Panc1 (cell line): ENCODE measurements at regions of chr5 and their contacts with region 1.

Region 1: DNA sequence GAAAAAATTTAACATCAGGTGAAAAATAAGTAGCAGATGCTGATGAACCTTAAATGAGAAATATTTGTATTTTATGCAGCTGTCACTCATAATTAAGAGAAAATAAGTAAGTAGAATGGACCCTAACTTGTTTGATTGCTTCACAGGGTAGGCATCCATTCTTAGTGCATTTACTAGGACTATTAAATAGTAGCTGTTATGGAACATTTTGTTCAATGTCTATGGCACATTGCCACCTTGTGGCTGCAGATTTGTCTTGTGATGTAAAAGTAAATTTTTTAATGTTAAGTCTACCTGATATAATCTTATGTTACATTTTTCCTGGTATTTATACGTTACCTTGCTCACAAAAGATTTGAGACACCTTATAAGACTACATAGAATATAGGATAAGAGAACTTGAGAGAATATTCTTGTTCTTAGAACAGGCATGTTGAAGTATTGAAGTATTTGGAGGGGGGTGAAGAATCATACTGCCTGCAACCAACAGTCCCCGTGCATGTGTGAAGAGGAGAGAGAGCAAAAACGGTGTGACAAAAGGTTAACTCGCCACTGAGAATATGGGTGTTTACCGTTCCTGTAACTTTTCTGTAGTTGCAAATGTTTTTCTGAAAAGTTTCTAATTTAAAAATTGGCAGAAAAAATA is 161.1 kb downstream of the MAST4 start:
- DNase-seq: peak; percentile 28
- ATAC-seq: 0 out of 2 replicates have a peak, but pooled peaks have one; percentile 71
- H3K4me3 ChIP-seq: no peak overlapping the region
- H3K27ac ChIP-seq: no peak overlapping the region
- H3K4me1 ChIP-seq: no peaks in the 10 kb centered on the region
- H3K27me3 ChIP-seq: peaks cover 2% of the 10 kb centered on the region; the same call in 1 of the 2 replicates
- CTCF ChIP-seq: peak; percentile 46; the same call in 1 of the 2 replicates

Region 2: DNA sequence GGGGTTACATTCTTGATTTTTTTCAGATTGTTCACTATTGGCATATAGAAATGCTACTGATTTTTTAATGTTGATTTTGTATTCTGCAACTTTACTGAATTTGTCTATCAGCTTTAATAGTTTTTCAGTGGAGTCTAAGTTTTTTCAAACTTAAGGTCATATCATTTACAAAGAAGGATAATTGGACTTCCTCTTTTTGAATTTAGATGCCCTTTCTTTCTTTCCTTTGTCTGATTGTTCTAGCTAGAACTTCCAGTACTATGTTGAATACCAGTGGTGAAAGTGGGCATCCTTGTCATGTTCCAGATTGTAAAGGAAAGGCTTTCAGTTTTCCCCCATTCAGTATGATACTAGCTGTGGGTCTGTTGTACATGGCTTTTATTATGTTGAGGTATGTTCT is 563.9 kb before region 1 on chr5:
- CTCF ChIA-PET with region 1: interaction called, 17 read pairs
- POLR2A ChIA-PET with region 1: no interaction called
- in situ Hi-C with region 1: no loop called
- intact Hi-C with region 1: no loop called
- DNase-seq: no peak
- ATAC-seq: no peak
- H3K4me3 ChIP-seq: no peak overlapping the region
- H3K27ac ChIP-seq: no peak overlapping the region
- H3K4me1 ChIP-seq: no peaks in the 10 kb centered on the region
- H3K27me3 ChIP-seq: no peaks in the 10 kb centered on the region
- CTCF ChIP-seq: no peak

Region 3: DNA sequence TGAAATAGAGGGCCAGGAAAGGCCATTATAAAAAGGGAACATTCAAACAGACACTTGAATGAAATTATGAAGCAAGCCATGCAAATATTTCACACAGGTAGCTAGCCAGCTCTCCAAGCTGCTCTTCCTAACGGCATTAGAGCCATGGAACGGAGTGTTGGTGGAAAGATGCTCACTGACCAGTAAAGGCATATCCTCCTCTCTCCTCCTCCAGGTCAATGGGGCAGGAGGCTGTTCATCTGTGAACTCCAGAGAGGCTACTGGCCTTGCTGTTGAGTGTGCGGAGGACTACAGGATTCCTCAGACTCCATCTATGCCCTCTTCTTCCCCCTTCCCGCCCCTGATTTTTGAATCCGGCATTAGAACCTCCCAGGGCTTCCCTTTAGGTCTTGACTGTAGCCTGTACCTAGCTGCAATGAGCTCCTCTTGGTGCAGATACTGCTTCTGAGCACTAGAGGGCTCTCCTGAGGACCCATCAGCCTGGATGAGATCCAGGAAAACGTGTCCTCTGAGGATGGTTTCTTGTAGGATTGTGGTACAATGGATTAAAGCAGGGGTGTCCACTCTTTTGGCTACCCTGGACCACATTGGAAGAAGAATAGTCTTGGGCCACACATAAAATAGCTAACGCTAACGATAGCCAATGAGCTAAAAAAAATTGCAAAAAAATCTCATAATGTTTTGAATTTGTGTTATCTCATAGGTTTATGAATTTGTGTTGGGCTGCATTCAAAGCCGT is 451.0 kb before region 1 on chr5:
- CTCF ChIA-PET with region 1: interaction called, 5 read pairs
- POLR2A ChIA-PET with region 1: no interaction called
- in situ Hi-C with region 1: no loop called
- intact Hi-C with region 1: loop called (anchors 1 kb)
- DNase-seq: peak; percentile 54
- ATAC-seq: peak; percentile 85
- H3K4me3 ChIP-seq: no peak overlapping the region
- H3K27ac ChIP-seq: no peak overlapping the region
- H3K4me1 ChIP-seq: no peaks in the 10 kb centered on the region
- H3K27me3 ChIP-seq: no peaks in the 10 kb centered on the region; the same call in none of the 2 replicates
- CTCF ChIP-seq: peak; percentile 91

Region 4: DNA sequence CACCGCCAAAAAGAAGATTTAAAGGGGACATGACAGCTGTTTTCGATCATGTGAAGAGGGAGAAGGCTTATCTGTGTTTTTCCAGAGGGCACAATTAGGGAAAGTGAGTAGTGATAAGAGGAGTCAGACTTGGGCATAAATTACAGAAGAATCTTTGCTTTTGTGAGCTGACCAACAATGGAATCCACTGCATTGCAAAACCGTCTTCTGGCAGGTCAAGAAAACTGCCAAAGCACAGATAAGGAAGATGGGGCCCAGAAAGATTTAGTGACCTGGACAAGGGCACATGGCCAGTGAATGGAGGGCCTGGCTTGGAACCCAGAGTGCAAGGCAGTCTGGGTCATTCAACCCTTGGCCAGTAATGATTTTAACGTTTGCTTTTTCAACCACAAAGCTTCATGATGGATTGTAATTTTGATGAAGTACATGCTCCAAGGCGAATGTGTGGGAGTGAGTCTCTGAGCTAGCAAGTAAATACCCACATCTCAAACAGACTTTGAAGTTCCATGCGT is 314.3 kb before region 1 on chr5:
- CTCF ChIA-PET with region 1: no interaction called
- POLR2A ChIA-PET with region 1: no interaction called
- in situ Hi-C with region 1: no loop called
- intact Hi-C with region 1: no loop called
- DNase-seq: no peak
- ATAC-seq: no peak
- H3K4me3 ChIP-seq: no peak overlapping the region
- H3K27ac ChIP-seq: no peak overlapping the region
- H3K4me1 ChIP-seq: no peaks in the 10 kb centered on the region
- H3K27me3 ChIP-seq: no peaks in the 10 kb centered on the region
- CTCF ChIP-seq: no peak

Region 5: GRCh38 chr5:66769839-66770617 is 12.7 kb after region 1 on chr5:
- CTCF ChIA-PET with region 1: no interaction called
- POLR2A ChIA-PET with region 1: no interaction called
- in situ Hi-C with region 1: no loop called
- intact Hi-C with region 1: no loop called
- DNase-seq: no peak
- ATAC-seq: 0 out of 2 replicates have a peak, but pooled peaks have one; percentile 56
- H3K4me3 ChIP-seq: no peak overlapping the region
- H3K27ac ChIP-seq: no peak overlapping the region
- H3K4me1 ChIP-seq: no peaks in the 10 kb centered on the region
- H3K27me3 ChIP-seq: no peaks in the 10 kb centered on the region; the same call in none of the 2 replicates
- CTCF ChIP-seq: peak; percentile 40